A549 (cell line): ENCODE measurements at regions of chr2 and their contacts with region 1.

Region 1: GRCh38 chr2:233912691-233913423 is 4.3 kb upstream of the TRPM8 start:
- DNase-seq: peak; percentile 12 to 27
- ATAC-seq: peak; percentile 72 to 74; a peak in 5 of 6 replicates
- H3K4me3 ChIP-seq: no peak overlapping the region
- H3K27ac ChIP-seq: no peak overlapping the region
- H3K4me1 ChIP-seq: no peaks in the 10 kb centered on the region
- CTCF ChIP-seq: no peak
- EP300 ChIP-seq: no peak
- POLR2A ChIP-seq: no peak
- RAD21 ChIP-seq: no peak

Region 2: GRCh38 chr2:232979871-232980461 is 932.9 kb before region 1 on chr2:
- CTCF ChIA-PET with region 1: no interaction called
- POLR2A ChIA-PET with region 1: no interaction called
- DNase-seq: peak; percentile 79 to 88
- ATAC-seq: peak; percentile 92 to 97
- H3K4me3 ChIP-seq: no peak overlapping the region
- H3K27ac ChIP-seq: peak overlapping the region; percentile 74 to 86
- H3K4me1 ChIP-seq: peaks cover 36% of the 10 kb centered on the region
- CTCF ChIP-seq: peak; percentile 62
- EP300 ChIP-seq: peak in 1 of 2 experiments; percentile 39; a peak in 1 of 5 replicates
- POLR2A ChIP-seq: no peak
- RAD21 ChIP-seq: peak; percentile 87 to 88

Region 3: GRCh38 chr2:233928594-233929351 is 15.9 kb after region 1 on chr2:
- CTCF ChIA-PET with region 1: interaction called, 18 read pairs
- POLR2A ChIA-PET with region 1: no interaction called
- DNase-seq: peak; percentile 16 to 55
- ATAC-seq: peak; percentile 44 to 72; a peak in 3 of 6 replicates
- H3K4me3 ChIP-seq: no peak overlapping the region
- H3K27ac ChIP-seq: peak overlapping the region in 1 of 2 experiments; percentile 74; a peak in 4 of 6 replicates
- H3K4me1 ChIP-seq: peaks cover 10% of the 10 kb centered on the region
- CTCF ChIP-seq: peak; percentile 75
- EP300 ChIP-seq: no peak
- POLR2A ChIP-seq: no peak
- RAD21 ChIP-seq: peak; percentile 61 to 66; a peak in 4 of 5 replicates

Region 4: GRCh38 chr2:234251326-234252271 is 338.7 kb after region 1 on chr2:
- CTCF ChIA-PET with region 1: no interaction called
- POLR2A ChIA-PET with region 1: no interaction called
- DNase-seq: peak; percentile 56 to 91
- ATAC-seq: peak; percentile 66 to 70
- H3K4me3 ChIP-seq: no peak overlapping the region
- H3K27ac ChIP-seq: peak overlapping the region; percentile 93 to 95
- H3K4me1 ChIP-seq: peaks cover 74% of the 10 kb centered on the region
- CTCF ChIP-seq: no peak
- EP300 ChIP-seq: peak; percentile 85 to 86; a peak in 3 of 5 replicates
- POLR2A ChIP-seq: no peak
- RAD21 ChIP-seq: peak; percentile 28 to 55; a peak in 3 of 5 replicates